BJ (cell line): ENCODE measurements at regions of chr3 and their contacts with region 1.

Region 1: GRCh38 chr3:46923559-46924350 is 46.2 kb downstream of the PTH1R start:
- DNase-seq: no peak
- H3K4me3 ChIP-seq: no peak overlapping the region
- H3K27me3 ChIP-seq: no peaks in the 10 kb centered on the region
- CTCF ChIP-seq: peak; percentile 70

Region 2: GRCh38 chr3:46797458-46797857 is 126.3 kb before region 1 on chr3:
- CTCF ChIA-PET with region 1: no interaction called
- POLR2A ChIA-PET with region 1: no interaction called
- DNase-seq: no peak
- H3K4me3 ChIP-seq: no peak overlapping the region
- H3K27me3 ChIP-seq: no peaks in the 10 kb centered on the region
- CTCF ChIP-seq: no peak

Region 3: DNA sequence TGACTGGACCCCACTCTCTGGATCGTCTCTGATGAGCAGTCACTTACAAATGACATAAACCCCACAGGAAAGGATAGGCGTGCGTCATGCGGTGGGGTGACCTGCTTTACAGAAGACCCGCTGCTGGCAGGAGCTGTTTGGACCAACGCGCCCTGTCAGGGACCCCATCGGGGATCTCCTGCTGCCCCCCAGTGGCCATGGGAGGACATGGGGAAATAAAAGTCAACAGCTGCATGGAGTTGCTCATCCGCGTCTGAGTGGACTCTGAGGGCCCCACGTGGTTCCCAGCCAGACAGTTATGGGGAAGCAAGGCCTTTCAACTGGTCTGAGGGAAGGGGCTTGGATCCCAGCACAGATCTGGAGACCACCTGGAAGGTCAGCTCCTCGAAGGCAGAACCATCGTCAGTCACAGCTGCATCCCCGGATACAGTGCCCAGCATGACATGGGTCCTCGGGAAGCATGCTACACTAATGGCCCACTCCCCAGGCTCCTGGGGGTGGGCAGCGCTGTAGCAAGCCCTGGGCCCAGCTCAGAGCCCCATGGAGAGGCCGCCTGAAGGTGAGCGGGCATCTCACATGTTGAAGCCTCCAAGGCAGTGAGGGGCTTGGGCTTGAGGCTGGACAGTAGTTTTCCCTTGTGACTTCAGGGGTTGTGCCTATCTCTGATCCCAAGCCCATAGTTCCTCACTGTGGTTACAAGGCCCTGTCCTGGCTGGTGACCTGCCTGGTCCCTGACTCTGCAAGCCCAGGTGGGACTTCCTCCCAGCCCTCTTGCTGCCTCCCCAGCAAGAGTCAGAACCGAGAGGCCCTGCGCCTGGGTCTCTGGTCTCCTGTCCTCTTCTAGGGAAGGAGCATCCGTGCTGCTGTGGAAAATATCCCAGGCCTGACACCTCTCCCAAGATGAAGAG is 14.0 kb before region 1 on chr3:
- CTCF ChIA-PET with region 1: interaction called, 18 read pairs
- POLR2A ChIA-PET with region 1: no interaction called
- DNase-seq: no peak
- H3K4me3 ChIP-seq: no peak overlapping the region
- H3K27me3 ChIP-seq: no peaks in the 10 kb centered on the region
- CTCF ChIP-seq: peak; percentile 94

Region 4: GRCh38 chr3:46935168-46935858 is 11.6 kb after region 1 on chr3:
- CTCF ChIA-PET with region 1: interaction called, 47 read pairs
- POLR2A ChIA-PET with region 1: no interaction called
- DNase-seq: peak; percentile 75
- H3K4me3 ChIP-seq: no peak overlapping the region
- H3K27me3 ChIP-seq: no peaks in the 10 kb centered on the region
- CTCF ChIP-seq: peak; percentile 94

Region 5: DNA sequence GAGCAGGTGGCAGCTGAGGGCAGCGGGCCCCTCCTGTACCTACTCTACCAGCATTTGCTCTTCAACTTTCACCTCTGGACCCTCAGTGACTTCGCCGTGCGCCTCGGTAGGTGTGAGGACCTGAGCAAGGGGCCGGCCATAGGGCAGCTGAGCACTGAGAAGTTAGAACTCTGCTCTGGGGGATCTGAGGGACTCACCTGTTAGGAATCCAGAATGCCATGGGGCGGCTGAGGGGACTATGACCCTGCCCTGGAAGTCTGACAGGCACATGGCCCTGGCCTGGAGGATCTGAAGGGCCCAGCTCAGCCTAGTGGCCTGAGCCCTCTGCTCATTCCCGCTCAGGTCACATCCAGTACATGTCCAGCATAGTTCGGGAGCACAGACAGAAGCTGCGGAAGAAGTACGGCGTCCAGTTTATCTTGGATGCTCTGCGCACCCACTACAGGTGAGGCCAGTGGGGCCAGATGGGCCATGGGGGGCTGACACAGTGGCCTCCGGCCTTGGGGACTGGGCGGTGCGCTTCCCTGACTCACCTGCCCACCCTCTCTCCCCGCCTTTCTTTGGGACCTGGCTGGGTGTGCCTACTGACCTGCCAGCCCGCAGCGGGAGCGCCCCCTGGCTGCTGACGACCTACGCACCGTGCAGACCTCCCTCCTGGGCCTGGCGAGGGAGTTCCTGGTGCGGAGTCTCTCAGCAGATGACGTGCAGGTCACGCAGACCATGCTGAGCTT is 74.5 kb after region 1 on chr3:
- CTCF ChIA-PET with region 1: interaction called, 24 read pairs
- POLR2A ChIA-PET with region 1: no interaction called
- DNase-seq: no peak
- H3K4me3 ChIP-seq: no peak overlapping the region
- H3K27me3 ChIP-seq: no peaks in the 10 kb centered on the region
- CTCF ChIP-seq: peak; percentile 83

Region 6: DNA sequence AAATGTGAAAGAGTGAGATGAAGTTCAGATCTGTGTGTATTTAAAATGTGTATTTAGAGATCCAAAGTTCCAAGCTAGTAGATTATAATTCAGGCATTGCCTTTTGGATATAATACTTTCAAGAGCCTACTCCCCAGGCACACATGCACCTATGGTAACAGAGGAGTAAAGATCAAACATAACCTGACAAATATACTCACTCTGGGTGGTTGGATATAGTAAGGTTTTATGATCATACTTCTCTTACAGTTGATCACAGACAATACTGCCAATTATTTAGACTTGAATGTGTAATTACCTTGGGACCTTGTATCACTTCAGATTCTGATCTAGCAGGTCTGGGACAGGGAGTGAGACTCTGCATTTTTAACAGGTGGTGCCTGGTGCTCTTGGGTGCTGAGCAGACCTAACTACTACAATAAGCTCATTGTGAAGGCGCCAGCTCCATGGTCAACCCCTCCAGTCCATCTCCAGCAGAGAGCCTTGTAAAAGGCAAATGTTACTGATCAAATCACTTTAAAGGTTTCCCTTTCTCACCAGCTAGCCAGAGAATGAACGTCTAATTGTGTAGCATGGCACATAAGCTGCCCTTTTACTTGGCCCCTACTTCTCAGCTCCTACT is 111.2 kb after region 1 on chr3:
- CTCF ChIA-PET with region 1: interaction called, 12 read pairs
- POLR2A ChIA-PET with region 1: no interaction called
- DNase-seq: no peak
- H3K4me3 ChIP-seq: no peak overlapping the region
- H3K27me3 ChIP-seq: no peaks in the 10 kb centered on the region
- CTCF ChIP-seq: no peak